GM10248 (cell line): ENCODE measurements at regions of chr1 and their contacts with region 1.

Region 1: GRCh38 chr1:204506961-204507387 is 9.2 kb upstream of the MDM4 start:
- DNase-seq: peak; percentile 56
- CTCF ChIP-seq: no peak

Region 2: GRCh38 chr1:204257954-204258752 is 248.8 kb before region 1 on chr1:
- CTCF ChIA-PET with region 1: interaction called, 10 read pairs
- POLR2A ChIA-PET with region 1: no interaction called
- DNase-seq: peak; percentile 74
- CTCF ChIP-seq: peak; percentile 51

Region 3: GRCh38 chr1:204417231-204417997 is 89.6 kb before region 1 on chr1:
- CTCF ChIA-PET with region 1: interaction called, 11 read pairs
- POLR2A ChIA-PET with region 1: no interaction called
- DNase-seq: no peak
- CTCF ChIP-seq: no peak

Region 4: DNA sequence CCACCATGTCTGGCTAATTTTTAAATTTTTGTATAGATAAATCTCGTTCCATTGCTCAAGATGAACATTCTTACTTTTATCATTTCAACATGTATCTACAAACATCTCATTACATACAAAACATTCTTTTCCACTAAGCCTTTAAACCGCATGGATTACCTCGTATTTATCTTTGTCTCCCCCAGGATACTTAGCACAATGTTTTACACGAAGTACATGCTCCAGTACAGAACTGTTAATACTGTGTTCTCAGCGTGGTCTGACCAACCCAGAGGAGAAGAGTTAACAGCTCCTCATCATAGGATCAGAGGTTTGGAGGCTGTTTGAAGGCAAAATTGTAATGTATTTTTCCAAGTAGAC is 19.7 kb before region 1 on chr1:
- CTCF ChIA-PET with region 1: interaction called, 115 read pairs
- POLR2A ChIA-PET with region 1: interaction called, 8 read pairs
- DNase-seq: no peak
- CTCF ChIP-seq: no peak

Region 5: GRCh38 chr1:204523605-204524215 is 16.7 kb after region 1 on chr1:
- CTCF ChIA-PET with region 1: interaction called, 36 read pairs
- POLR2A ChIA-PET with region 1: interaction called, 3 read pairs
- DNase-seq: no peak
- CTCF ChIP-seq: no peak